ENCODE measurements at regions of chr12 and their contacts with region 1.

Region 1: GRCh38 chr12:26832822-26833742 is at the start of gene ITPR2:
- DNase-seq: peak; percentile 95
- H3K4me3 ChIP-seq: peak within 1 kb of the TSS; percentile 86
- H3K27ac ChIP-seq: peak within 1 kb of the TSS; percentile 73
- H3K4me1 ChIP-seq: peaks cover 46% of the 10 kb centered on the region
- CTCF ChIP-seq: peak; percentile 41
- total RNA-seq, gene ITPR2: 25.6 and 33.7 TPM in 2 replicates

Region 2: GRCh38 chr12:25250744-25251730 is 1582.0 kb before region 1 on chr12 and contains the start of gene KRAS:
- CTCF ChIA-PET with region 1: no interaction called
- POLR2A ChIA-PET with region 1: no interaction called
- intact Hi-C with region 1: loop called (anchors 5 kb)
- DNase-seq: peak; percentile 97
- H3K4me3 ChIP-seq: peak within 1 kb of the TSS; percentile 99
- H3K27ac ChIP-seq: peak within 1 kb of the TSS; percentile 55
- H3K4me1 ChIP-seq: peaks cover 56% of the 10 kb centered on the region
- CTCF ChIP-seq: no peak
- total RNA-seq, gene KRAS: 8.6 and 14.7 TPM in 2 replicates

Region 3: GRCh38 chr12:26732005-26732908 is 100.8 kb before region 1 on chr12:
- CTCF ChIA-PET with region 1: no interaction called
- POLR2A ChIA-PET with region 1: interaction called, 3 read pairs
- intact Hi-C with region 1: loop called (anchors 5 kb)
- DNase-seq: peak; percentile 48
- H3K4me3 ChIP-seq: peak overlapping the region; percentile 8
- H3K27ac ChIP-seq: no peak overlapping the region
- H3K4me1 ChIP-seq: peaks cover 21% of the 10 kb centered on the region
- CTCF ChIP-seq: no peak

Region 4: GRCh38 chr12:26878661-26879119 is 45.6 kb after region 1 on chr12:
- CTCF ChIA-PET with region 1: interaction called, 3 read pairs
- POLR2A ChIA-PET with region 1: interaction called, 9 read pairs
- intact Hi-C with region 1: loop called (anchors 2 kb)
- DNase-seq: peak; percentile 87
- H3K4me3 ChIP-seq: peak overlapping the region; percentile 38
- H3K27ac ChIP-seq: peak overlapping the region; percentile 27
- H3K4me1 ChIP-seq: peaks cover 18% of the 10 kb centered on the region
- CTCF ChIP-seq: no peak

Region 5: GRCh38 chr12:27220057-27220987 is 387.2 kb after region 1 on chr12:
- CTCF ChIA-PET with region 1: no interaction called
- POLR2A ChIA-PET with region 1: no interaction called
- intact Hi-C with region 1: loop called (anchors 5 kb)
- DNase-seq: peak; percentile 27
- H3K4me3 ChIP-seq: no peak overlapping the region
- H3K27ac ChIP-seq: no peak overlapping the region
- H3K4me1 ChIP-seq: peaks cover 25% of the 10 kb centered on the region
- CTCF ChIP-seq: no peak